Right ventricle myocardium superior (tissue), 1 donor: ENCODE measurements at regions of chr19 and their contacts with region 1.

Region 1: DNA sequence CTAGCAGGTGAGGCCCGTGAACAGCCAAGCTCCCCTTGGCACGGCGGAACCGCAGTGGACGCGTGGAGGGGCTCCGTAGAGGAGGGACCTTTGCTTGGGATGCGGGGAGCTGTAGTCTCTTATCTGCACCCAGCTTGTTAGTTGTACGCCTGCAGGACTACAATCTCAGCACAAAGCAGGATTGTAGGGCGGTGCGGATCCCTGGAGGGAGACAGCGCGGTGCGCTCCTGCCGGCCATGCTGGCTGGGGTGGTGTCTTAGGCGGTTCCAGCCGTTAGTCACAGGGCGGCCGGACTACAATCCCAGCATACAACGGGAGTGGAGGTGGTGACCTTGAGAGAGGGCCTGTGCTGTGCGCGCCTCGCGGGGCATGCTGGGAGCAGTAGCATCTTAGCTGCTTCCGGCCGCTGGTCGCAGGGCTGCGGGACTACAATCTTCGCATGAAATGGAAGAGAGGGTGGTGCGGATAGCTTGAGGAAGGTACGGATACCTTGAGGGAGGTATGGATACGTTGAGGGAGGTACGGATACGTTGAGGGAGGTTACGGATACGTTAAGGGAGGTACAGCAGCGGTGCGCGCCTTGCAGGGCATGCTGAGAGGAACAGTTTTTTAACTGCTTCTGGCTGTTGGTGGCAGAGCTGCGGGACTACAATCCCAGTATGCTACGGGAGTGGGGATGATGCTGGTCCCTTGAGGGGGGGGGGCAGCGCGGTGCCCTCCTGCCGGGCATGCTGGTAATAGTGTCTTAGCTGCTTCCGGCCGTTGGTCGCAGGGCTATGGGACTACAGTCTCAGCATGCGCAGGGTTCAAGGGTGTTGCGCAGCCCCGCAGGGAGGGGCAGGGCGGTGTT is 1419.1 kb downstream of the UQCRFS1 start:
- DNase-seq: peak; percentile 96
- ATAC-seq: peak; percentile 98

Region 2: DNA sequence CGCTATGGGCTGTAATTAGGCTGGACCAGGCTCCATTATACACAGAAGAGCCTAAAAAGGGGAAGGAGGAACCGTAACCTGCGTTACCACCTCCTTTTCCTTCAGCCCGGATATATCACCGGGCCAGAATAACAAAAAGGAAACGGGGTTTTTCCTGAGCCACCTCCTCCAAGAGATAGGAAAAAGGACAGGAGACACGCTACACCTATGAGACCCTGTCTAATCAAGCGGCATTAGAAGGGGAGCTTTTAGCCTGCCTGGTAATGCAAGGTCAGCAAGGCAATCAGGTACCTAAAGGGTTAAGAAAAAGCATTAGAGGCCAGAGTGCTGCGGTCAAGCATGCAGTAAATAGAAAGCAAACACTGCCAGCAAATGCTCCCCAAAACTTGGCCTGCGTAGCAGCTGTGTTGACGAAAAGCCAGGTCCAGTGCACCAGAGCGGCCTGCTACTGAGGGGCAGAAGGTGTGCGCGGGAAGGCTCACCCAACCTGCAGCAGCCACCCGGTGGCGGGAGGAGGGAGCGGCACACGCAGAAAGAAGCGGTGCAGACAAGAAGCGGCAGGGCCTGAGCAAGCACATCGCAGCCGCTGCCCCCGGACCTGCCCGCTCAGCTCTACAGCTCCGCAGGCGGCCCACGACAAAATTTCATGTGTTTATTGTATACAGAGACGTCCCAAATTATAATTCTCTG is 47.0 kb before region 1 on chr19:
- intact Hi-C with region 1: loop called (anchors 5 kb)
- DNase-seq: peak; percentile 61
- ATAC-seq: peak; percentile 86

Region 3: DNA sequence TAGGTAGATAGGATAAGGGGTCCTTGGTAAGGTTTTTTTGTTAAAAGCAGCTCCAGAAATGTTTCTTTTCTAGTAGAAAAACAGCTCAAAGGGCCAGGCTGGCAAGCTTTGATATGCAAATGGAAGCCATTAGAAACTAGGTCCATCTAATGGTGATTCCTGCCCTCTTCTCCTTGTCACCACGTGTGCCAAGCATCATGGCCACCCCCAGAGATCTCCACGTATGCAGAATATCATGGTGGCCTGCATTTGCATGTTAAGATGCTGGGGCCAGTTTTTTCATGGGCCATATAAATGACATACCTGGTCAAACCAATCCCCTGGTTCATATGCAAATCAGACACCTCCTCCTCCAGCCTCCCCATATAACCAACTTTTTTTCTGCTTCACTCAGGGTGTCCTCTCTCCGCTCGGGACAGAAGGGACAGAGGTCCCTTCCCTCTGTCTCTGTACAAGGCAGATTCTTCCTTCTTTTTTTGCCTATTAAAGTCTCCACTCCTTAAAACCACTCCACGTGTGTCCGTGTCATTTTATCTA is 83.2 kb after region 1 on chr19:
- intact Hi-C with region 1: no loop called
- DNase-seq: no peak
- ATAC-seq: no peak